ENCODE measurements at regions of chr1 and their contacts with region 1.

Region 1: DNA sequence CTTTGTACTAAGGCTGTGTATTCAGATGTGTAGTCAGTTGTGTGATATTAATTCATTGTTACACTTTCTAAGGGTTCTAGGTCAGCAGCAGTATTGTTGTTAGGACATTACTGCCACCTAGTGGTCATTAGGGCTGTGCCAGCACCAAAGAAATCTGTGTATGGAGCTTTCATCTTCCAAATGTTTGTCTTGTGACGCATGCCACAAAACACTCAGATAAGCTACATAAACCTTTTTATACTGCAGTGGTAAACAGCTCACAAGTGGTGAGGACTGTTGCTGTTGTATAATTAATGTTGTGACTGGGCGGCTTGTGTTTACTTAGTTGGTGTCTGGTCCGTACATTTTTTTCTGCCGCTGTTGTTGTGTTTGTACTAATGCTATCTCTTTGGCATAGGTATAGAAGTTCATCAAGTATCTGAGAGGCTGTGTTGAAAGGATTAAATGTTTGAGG is 51.7 kb downstream of the S1PR1 start:
- DNase-seq: peak; percentile 84
- H3K4me3 Mint-ChIP-seq: no peak overlapping the region
- H3K27ac Mint-ChIP-seq: peak overlapping the region; percentile 72
- H3K4me1 Mint-ChIP-seq: peaks cover 84% of the 10 kb centered on the region
- H3K27me3 Mint-ChIP-seq: no peaks in the 10 kb centered on the region

Region 2: GRCh38 chr1:100443811-100444571 is 844.5 kb before region 1 on chr1:
- CTCF ChIA-PET with region 1: no interaction called
- intact Hi-C with region 1: loop called (anchors 5 kb)
- DNase-seq: peak; percentile 53
- H3K4me3 Mint-ChIP-seq: peak overlapping the region; percentile 72
- H3K27ac Mint-ChIP-seq: peak overlapping the region; percentile 96
- H3K4me1 Mint-ChIP-seq: peaks cover 85% of the 10 kb centered on the region
- H3K27me3 Mint-ChIP-seq: no peaks in the 10 kb centered on the region

Region 3: GRCh38 chr1:100708476-100709062 is 579.9 kb before region 1 on chr1:
- CTCF ChIA-PET with region 1: no interaction called
- intact Hi-C with region 1: no loop called
- DNase-seq: no peak
- H3K4me3 Mint-ChIP-seq: no peak overlapping the region
- H3K27ac Mint-ChIP-seq: no peak overlapping the region
- H3K4me1 Mint-ChIP-seq: peaks cover 5% of the 10 kb centered on the region
- H3K27me3 Mint-ChIP-seq: peaks cover 13% of the 10 kb centered on the region

Region 4: DNA sequence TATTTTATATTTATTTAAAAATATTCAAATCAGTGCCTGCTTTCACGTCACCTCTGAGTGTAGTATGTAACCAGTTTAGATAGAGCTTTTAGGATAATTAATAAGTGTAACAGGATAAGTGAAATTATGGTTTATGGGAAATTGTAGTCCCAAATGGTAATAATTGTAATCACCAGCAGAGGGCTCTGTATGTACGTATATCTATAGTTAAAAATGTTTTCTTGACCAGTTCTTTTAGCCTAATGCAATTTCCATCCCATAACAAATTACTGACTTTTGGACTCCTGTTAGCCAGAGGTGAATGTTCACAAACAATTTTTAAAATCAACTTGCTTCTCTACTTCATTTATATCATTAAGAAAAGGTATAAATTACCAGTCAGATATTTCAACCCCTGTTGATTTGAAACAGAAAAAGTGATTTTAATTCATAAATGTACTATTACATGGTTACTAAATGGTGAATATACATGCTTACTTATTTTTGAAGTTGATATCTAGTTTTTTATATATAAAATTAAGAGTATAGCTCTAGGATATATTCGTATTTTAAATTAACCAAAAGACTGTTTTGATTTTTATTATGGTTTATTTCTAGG is 367.3 kb before region 1 on chr1:
- CTCF ChIA-PET with region 1: interaction called, 38 read pairs
- intact Hi-C with region 1: loop called (anchors 1 kb)
- DNase-seq: no peak
- H3K4me3 Mint-ChIP-seq: no peak overlapping the region
- H3K27ac Mint-ChIP-seq: peak overlapping the region; percentile 39
- H3K4me1 Mint-ChIP-seq: peaks cover 16% of the 10 kb centered on the region
- H3K27me3 Mint-ChIP-seq: no peaks in the 10 kb centered on the region

Region 5: DNA sequence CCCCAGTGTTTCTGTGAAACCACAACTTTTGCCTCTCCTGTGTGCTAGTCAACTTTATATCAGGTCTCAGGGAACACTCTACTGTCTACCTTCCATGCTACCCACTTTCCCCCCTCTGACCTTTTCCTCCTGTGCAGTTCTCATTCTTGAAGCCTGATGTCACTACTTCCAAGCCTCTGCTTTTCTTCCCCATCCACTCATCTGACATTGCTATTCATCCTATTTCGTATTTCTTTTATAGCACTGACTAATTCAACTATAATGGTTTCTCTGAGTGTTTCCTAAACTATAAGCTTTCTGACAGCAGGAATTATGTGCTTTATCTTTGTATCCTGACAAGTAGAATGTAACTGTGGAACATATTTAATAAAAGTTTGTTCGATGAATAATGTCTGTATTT is 244.7 kb before region 1 on chr1:
- CTCF ChIA-PET with region 1: interaction called, 5 read pairs
- intact Hi-C with region 1: loop called (anchors 1 kb)
- DNase-seq: no peak
- H3K4me3 Mint-ChIP-seq: no peak overlapping the region
- H3K27ac Mint-ChIP-seq: no peak overlapping the region
- H3K4me1 Mint-ChIP-seq: peaks cover 12% of the 10 kb centered on the region
- H3K27me3 Mint-ChIP-seq: no peaks in the 10 kb centered on the region

Region 6: DNA sequence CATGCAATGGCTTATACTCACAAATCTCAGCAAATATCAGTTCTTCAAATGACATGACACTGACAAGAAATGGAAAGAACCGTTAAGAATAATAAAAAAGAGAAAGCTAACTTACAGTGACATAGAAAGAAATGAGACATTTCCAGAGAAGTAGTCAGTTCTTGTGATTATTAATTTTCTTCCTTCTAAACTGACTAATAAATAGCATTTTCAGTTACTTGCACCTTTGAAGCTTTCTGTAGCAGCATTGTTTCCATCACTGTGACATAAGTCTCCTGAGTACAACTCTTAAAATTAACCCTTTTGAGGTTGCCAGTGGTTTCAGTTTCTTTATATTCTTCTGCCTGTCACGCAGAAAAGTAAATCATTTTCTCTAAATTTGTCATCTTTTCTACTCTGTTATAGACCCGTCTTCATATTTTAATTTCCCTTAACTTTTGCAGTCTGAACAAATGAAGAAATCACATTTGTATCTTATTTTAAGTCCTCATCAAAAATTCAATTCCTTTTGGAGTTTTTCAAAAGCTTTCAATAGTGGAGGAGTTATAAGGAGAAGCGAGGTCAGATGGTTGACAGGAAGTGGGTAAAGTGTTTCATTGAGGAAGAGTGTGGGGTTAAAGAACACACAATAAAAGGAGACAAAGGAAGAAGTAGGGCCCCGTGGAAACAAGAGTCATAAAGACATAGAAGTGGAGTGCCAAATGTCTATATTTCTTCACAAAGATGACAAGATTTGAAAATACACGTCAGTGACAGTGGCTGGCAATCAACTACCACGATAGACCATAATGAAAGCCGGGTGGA is 109.6 kb before region 1 on chr1:
- CTCF ChIA-PET with region 1: interaction called, 12 read pairs
- intact Hi-C with region 1: loop called (anchors 1 kb)
- DNase-seq: peak; percentile 66
- H3K4me3 Mint-ChIP-seq: peak overlapping the region; percentile 63
- H3K27ac Mint-ChIP-seq: peak overlapping the region; percentile 100
- H3K4me1 Mint-ChIP-seq: peaks cover 82% of the 10 kb centered on the region
- H3K27me3 Mint-ChIP-seq: no peaks in the 10 kb centered on the region

Region 7: GRCh38 chr1:101267082-101267481 is 21.4 kb before region 1 on chr1:
- CTCF ChIA-PET with region 1: interaction called, 18 read pairs
- intact Hi-C with region 1: no loop called
- DNase-seq: no peak
- H3K4me3 Mint-ChIP-seq: no peak overlapping the region
- H3K27ac Mint-ChIP-seq: no peak overlapping the region
- H3K4me1 Mint-ChIP-seq: peaks cover 33% of the 10 kb centered on the region
- H3K27me3 Mint-ChIP-seq: no peaks in the 10 kb centered on the region

Region 8: GRCh38 chr1:102282955-102283354 is 994.4 kb after region 1 on chr1:
- CTCF ChIA-PET with region 1: no interaction called
- intact Hi-C with region 1: no loop called
- DNase-seq: no peak
- H3K4me3 Mint-ChIP-seq: no peak overlapping the region
- H3K27ac Mint-ChIP-seq: no peak overlapping the region
- H3K4me1 Mint-ChIP-seq: no peaks in the 10 kb centered on the region
- H3K27me3 Mint-ChIP-seq: no peaks in the 10 kb centered on the region

Measured in activated naive CD4-positive, alpha-beta T cell treated with anti-CD3 and anti-CD28 coated beads for 36 hours (primary cell).